ENCODE measurements at regions of chrX and their contacts with region 1.

Region 1: GRCh38 chrX:109475174-109475891 is 6.6 kb downstream of the GUCY2F start:
- DNase-seq: peak in 9 of 10 donors; percentile 10 to 88 (median 44)

Region 2: DNA sequence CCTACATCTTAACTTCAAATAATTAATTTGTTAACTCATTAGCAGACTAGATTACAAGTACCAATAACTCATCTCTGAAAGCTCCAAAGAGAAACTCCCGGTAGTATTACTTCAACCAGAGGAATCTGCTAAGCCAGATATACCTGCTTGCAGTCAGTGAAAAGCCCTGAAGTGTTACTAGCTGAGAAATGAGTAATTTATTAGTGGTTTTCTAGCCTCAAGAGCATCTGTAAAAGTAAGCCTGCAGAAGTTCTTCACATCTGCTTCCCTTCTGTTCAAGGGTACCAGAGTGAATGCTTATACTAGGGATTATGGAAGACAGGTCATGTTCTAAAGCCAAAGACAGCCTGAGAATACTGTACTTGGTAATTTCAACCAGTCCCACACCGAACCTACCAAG is 773.7 kb before region 1 on chrX:
- intact Hi-C with region 1: loop called (anchors 10 kb)
- DNase-seq: no peak

Region 3: DNA sequence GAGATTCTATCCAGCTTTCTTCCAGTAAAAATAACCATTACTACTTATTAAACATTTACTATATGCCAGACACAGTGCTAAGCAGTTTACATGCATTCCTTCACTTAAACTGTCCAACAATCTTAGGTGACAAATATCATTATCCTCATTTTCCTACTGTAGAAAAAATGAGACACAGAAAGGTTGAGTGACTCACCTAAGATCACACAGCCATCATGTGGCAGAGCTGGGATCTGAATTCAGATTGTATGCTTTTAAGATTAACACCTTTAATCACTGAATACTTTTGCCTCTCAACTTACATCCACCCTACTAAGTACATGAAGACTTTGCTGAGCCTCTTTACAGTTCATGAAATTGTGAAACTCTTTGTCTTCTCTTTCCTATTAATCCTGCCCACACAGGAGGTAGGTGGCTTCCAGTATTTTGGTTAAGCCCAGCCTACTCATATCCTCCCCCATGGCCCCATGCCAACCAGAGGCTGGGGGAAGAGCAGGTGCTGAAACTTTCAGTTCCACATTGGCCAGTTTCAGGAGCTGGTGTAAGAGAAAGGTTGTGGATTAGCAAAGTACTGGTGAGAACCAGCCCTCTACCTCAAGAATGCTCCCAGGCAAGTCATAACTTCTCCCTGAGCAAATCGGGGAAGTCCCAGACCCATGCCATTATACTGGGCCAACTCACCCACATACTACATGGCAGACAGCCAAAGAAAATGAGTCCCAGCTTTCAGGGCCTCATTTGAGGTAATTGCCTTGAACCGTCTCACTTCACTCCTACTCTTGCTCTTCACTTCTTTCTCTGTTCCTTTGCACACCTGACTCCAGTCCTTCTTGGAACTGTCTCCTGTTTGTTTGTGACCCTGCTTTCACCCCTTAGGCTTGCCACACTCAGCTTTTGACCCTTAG is 204.5 kb before region 1 on chrX:
- intact Hi-C with region 1: no loop called
- DNase-seq: no peak

Region 4: DNA sequence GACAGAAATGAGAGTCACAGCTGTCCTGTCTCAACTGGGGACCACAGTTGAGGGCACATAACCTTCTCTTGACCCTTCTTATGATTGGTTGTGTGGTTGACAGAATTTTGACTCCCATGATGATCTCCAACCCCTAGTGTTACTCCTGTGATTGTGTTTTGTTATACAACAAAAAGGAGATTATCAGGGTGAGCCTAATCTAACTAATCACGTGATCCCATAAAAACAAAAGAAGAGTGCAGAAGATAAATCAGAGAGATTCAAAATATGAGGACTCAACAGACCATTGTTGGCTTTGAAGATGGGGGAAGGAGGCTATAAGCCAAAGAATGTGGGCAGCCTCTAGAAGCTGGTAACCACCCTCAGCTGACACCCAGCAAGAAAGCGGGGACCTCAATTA is 66.2 kb before region 1 on chrX:
- intact Hi-C with region 1: no loop called
- DNase-seq: no peak